ENCODE measurements at regions of chr4 and their contacts with region 1.

Region 1: GRCh38 chr4:151948351-151949016 is 187.7 kb upstream of the GATB start:
- DNase-seq: no peak
- H3K4me3 ChIP-seq: no peak overlapping the region
- H3K27ac ChIP-seq: no peak overlapping the region
- H3K4me1 ChIP-seq: no peaks in the 10 kb centered on the region
- H3K27me3 ChIP-seq: no peaks in the 10 kb centered on the region
- CTCF ChIP-seq: no peak
- POLR2A ChIP-seq: no peak

Region 2: GRCh38 chr4:151983854-151984253 is 35.4 kb after region 1 on chr4:
- CTCF ChIA-PET with region 1: no interaction called
- POLR2A ChIA-PET with region 1: no interaction called
- dilution Hi-C with region 1: no loop called
- intact Hi-C with region 1: loop called (anchors 1 kb)
- DNase-seq: no peak
- H3K4me3 ChIP-seq: no peak overlapping the region
- H3K27ac ChIP-seq: no peak overlapping the region
- H3K4me1 ChIP-seq: no peaks in the 10 kb centered on the region
- H3K27me3 ChIP-seq: no peaks in the 10 kb centered on the region
- CTCF ChIP-seq: no peak
- POLR2A ChIP-seq: no peak

Region 3: DNA sequence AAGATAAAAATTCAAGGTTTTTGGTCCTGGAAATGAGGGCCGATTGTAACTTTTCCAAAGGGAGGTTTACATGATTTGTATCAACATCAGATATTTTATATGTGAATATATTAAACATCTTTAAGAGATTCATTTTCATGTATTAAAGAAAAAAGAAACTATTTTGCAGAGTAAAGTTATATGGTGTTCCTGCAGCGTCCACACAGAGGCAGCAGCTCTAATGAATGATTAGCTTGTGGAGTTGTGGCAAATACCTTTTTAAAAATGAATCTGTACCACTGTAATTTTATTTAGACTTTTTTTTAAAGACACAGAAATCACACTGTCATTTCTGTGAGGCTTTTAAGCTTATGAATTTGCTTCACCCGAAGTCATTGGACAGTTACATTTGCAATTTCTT is 962.0 kb after region 1 on chr4:
- CTCF ChIA-PET with region 1: no interaction called
- POLR2A ChIA-PET with region 1: no interaction called
- dilution Hi-C with region 1: no loop called
- intact Hi-C with region 1: no loop called
- DNase-seq: no peak
- H3K4me3 ChIP-seq: no peak overlapping the region
- H3K27ac ChIP-seq: no peak overlapping the region
- H3K4me1 ChIP-seq: no peaks in the 10 kb centered on the region
- H3K27me3 ChIP-seq: no peaks in the 10 kb centered on the region
- CTCF ChIP-seq: no peak
- POLR2A ChIP-seq: no peak

Measured in endothelial cell of umbilical vein (primary cell).